Activated naive CD4-positive, alpha-beta T cell treated with anti-CD3 and anti-CD28 coated beads for 36 hours (primary cell): ENCODE measurements at regions of chrX and their contacts with region 1.

Region 1: GRCh38 chrX:131812836-131813825 is 210.0 kb upstream of the STK26 start:
- DNase-seq: peak; percentile 79
- H3K4me3 Mint-ChIP-seq: peak overlapping the region; percentile 67
- H3K27ac Mint-ChIP-seq: peak overlapping the region; percentile 89
- H3K4me1 Mint-ChIP-seq: peaks cover 30% of the 10 kb centered on the region
- H3K27me3 Mint-ChIP-seq: no peaks in the 10 kb centered on the region

Region 2: DNA sequence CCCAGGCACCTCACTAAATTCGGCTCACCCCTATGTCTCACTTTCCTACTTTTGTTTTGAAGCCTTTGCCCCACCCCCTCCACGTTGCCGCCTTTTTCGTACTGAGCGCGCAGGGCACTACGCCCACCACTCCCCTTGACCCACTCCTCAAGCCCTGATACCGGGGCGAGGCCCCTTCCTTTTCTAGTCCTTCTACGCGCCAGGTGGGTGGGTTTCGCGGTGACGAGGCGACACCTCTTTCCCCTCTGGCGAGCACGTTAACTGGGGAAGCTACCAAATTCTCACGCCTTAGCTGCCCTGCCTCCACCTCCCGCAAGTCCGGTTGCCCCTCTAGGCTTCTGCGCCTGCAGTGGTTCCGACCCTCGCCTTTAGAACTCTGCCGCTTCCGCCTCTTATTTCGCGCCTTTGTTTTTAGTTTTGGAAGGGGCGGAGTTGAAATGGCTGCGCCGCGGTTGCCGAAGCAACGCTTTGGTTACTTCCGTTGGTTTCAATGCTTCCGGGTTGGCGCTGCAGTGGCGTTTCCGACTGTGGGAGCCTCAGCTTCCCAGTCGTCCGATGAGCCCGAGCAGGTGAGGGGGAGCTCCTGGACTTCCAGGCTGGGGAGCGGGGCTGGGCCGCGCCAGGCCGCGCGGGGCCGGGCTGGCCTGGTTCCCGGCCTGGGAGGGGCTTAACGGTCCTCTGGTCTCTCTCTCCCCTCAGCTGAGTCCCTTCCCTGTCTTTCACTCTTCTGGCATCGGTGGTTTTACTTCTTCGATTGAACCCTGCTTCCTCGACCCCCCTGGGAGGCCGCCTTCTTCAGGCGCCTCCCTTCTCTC is 1473.5 kb before region 1 on chrX and contains the start of gene SLC25A14:
- CTCF ChIA-PET with region 1: interaction called, 4 read pairs
- intact Hi-C with region 1: loop called (anchors 5 kb)
- DNase-seq: peak; percentile 82
- H3K4me3 Mint-ChIP-seq: peak within 1 kb of the TSS; percentile 86
- H3K27ac Mint-ChIP-seq: peak within 1 kb of the TSS; percentile 89
- H3K4me1 Mint-ChIP-seq: peaks cover 13% of the 10 kb centered on the region
- H3K27me3 Mint-ChIP-seq: no peaks in the 10 kb centered on the region
- total RNA-seq, gene SLC25A14: 7.4 to 9.0 TPM

Region 3: DNA sequence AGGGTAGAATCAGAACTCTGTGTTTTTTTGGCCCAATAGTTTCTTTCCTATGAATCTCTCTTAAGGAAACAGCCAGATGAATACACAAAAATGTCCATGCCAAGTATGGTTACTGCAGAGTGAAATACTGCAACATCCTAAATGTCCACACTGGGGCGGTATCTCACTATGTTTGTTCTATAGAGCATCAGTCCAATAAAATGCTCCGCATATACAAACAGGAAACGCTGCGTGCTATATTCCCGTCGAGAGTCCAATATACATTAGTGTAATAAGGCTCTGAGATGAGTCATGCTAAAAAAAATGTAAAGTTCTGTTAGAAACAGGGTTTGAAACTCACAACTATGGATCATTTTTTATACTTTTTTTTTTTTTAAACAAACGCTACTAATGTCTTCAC is 837.2 kb before region 1 on chrX:
- CTCF ChIA-PET with region 1: no interaction called
- intact Hi-C with region 1: loop called (anchors 10 kb)
- DNase-seq: peak; percentile 57
- H3K4me3 Mint-ChIP-seq: no peak overlapping the region
- H3K27ac Mint-ChIP-seq: no peak overlapping the region
- H3K4me1 Mint-ChIP-seq: no peaks in the 10 kb centered on the region
- H3K27me3 Mint-ChIP-seq: no peaks in the 10 kb centered on the region

Region 4: GRCh38 chrX:131725001-131725654 is 88.0 kb before region 1 on chrX:
- CTCF ChIA-PET with region 1: no interaction called
- intact Hi-C with region 1: no loop called
- DNase-seq: no peak
- H3K4me3 Mint-ChIP-seq: no peak overlapping the region
- H3K27ac Mint-ChIP-seq: no peak overlapping the region
- H3K4me1 Mint-ChIP-seq: no peaks in the 10 kb centered on the region
- H3K27me3 Mint-ChIP-seq: no peaks in the 10 kb centered on the region